ENCODE measurements at regions of chr17 and their contacts with region 1.

Region 1: GRCh38 chr17:20226814-20227482 is 217.8 kb downstream of the SPECC1 start:
- DNase-seq: peak; percentile 38 to 75 (median 50)
- H3K4me3 ChIP-seq: no peak overlapping the region
- H3K4me3 Mint-ChIP-seq: no peak overlapping the region
- H3K27ac ChIP-seq: no peak overlapping the region
- H3K27ac Mint-ChIP-seq: no peak overlapping the region
- H3K4me1 ChIP-seq: peaks cover 7% of the 10 kb centered on the region
- H3K4me1 Mint-ChIP-seq: peaks cover 0 to 6% (median 0%) of the 10 kb centered on the region in 3 donors
- H3K27me3 ChIP-seq: no peaks in the 10 kb centered on the region
- H3K27me3 Mint-ChIP-seq: no peaks in the 10 kb centered on the region

Region 2: GRCh38 chr17:20315821-20316220 is 88.9 kb after region 1 on chr17:
- CTCF ChIA-PET with region 1: interaction called, 17 read pairs
- POLR2A ChIA-PET with region 1: no interaction called
- DNase-seq: no peak
- H3K4me3 ChIP-seq: no peak overlapping the region
- H3K4me3 Mint-ChIP-seq: no peak overlapping the region
- H3K27ac ChIP-seq: no peak overlapping the region
- H3K27ac Mint-ChIP-seq: no peak overlapping the region
- H3K4me1 ChIP-seq: no peaks in the 10 kb centered on the region
- H3K4me1 Mint-ChIP-seq: peaks cover 0 to under 1% (median under 1%) of the 10 kb centered on the region in 3 donors
- H3K27me3 ChIP-seq: no peaks in the 10 kb centered on the region
- H3K27me3 Mint-ChIP-seq: peaks cover 0 to 1% of the 10 kb centered on the region in 2 donors

Measured in CD8-positive, alpha-beta memory T cell (primary cell).